Endothelial cell of umbilical vein (primary cell): ENCODE measurements at regions of chr5 and their contacts with region 1.

Region 1: GRCh38 chr5:100430268-100431195 is 104.6 kb upstream of the FAM174A start:
- DNase-seq: peak; percentile 54
- H3K4me3 ChIP-seq: no peak overlapping the region
- H3K27ac ChIP-seq: no peak overlapping the region
- H3K4me1 ChIP-seq: no peaks in the 10 kb centered on the region
- H3K27me3 ChIP-seq: no peaks in the 10 kb centered on the region
- CTCF ChIP-seq: peak; percentile 90 to 96
- POLR2A ChIP-seq: no peak

Region 2: GRCh38 chr5:100119903-100120302 is 310.6 kb before region 1 on chr5:
- CTCF ChIA-PET with region 1: no interaction called
- POLR2A ChIA-PET with region 1: no interaction called
- dilution Hi-C with region 1: no loop called
- intact Hi-C with region 1: no loop called
- DNase-seq: no peak
- H3K4me3 ChIP-seq: no peak overlapping the region
- H3K27ac ChIP-seq: no peak overlapping the region
- H3K4me1 ChIP-seq: no peaks in the 10 kb centered on the region
- H3K27me3 ChIP-seq: no peaks in the 10 kb centered on the region
- CTCF ChIP-seq: no peak
- POLR2A ChIP-seq: no peak

Region 3: DNA sequence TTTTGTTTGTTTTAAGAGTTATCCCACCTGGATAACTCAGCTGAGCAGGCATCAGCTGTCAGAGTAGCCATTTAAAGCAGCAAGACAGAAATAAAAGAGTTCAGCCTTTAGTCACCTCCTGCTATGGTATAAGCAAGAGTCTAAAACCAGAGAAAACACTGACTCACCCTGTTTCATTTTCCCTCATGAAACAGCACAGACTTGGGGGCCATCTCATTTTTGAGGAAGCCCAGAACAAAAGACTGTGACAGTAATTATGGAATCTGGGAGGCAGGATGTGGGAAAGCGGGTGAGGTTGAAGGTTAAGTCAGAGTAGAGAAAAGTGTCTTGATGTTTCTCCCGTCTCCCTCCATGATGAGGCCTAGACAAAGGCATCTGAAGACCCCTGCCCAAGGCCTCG is 14.4 kb after region 1 on chr5:
- CTCF ChIA-PET with region 1: interaction called, 10 read pairs
- POLR2A ChIA-PET with region 1: no interaction called
- dilution Hi-C with region 1: no loop called
- intact Hi-C with region 1: no loop called
- DNase-seq: no peak
- H3K4me3 ChIP-seq: no peak overlapping the region
- H3K27ac ChIP-seq: no peak overlapping the region
- H3K4me1 ChIP-seq: no peaks in the 10 kb centered on the region
- H3K27me3 ChIP-seq: no peaks in the 10 kb centered on the region
- CTCF ChIP-seq: no peak
- POLR2A ChIP-seq: no peak

Region 4: DNA sequence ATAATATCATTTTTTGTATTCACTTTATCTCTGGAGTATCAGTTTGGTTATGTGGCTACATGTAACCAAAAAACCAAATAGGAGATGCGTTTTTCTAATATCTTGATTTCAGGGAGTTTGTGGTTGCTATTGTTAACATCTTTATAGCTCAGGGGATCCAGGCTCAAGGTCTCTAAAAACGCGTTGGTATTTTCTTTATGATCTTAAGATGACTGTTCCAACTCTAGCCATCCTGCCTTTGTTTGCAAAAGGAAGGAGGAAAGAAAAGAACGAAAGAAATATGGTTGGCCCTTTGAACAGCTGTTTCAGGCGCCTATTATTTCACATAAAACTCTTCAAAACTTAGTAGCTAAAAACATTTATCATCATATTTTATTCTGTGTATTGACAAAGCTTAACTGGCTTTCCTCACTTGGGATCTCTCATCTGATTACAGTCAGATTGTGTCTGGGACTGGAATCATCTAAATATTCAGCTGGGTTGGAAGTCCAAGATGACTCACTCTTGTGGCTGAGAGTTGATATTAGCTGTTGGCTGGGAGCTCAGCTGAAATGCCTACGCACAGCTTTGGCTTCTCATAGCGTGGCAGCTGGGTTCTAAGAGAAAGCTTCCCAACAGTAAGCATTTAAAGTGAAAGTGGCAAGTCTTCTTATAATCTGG is 164.8 kb after region 1 on chr5:
- CTCF ChIA-PET with region 1: interaction called, 10 read pairs
- POLR2A ChIA-PET with region 1: no interaction called
- dilution Hi-C with region 1: no loop called
- intact Hi-C with region 1: no loop called
- DNase-seq: peak; percentile 96
- H3K4me3 ChIP-seq: peak overlapping the region in 2 of 3 experiments; percentile 2 to 54
- H3K27ac ChIP-seq: peak overlapping the region; percentile 87
- H3K4me1 ChIP-seq: peaks cover 21% of the 10 kb centered on the region
- H3K27me3 ChIP-seq: no peaks in the 10 kb centered on the region
- CTCF ChIP-seq: no peak
- POLR2A ChIP-seq: no peak

Region 5: DNA sequence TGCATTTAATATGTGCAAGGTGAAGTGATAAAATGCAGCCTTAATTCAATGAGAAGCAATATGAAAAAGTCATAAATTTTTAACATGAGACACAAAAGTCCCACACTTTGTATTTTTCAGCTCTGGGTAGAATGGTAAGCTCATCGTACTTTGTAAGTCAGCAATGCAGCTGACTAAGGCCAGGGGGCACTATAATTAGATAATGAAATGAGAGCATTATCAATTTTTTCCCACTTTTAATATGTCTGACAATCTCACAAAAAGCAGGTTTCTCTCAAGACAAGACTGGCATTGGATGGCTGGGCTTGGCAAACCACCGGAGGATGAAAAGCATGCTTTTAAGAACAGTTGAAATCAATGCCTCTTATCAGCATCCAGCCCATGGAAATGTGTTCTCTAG is 267.4 kb after region 1 on chr5:
- CTCF ChIA-PET with region 1: no interaction called
- POLR2A ChIA-PET with region 1: no interaction called
- dilution Hi-C with region 1: no loop called
- intact Hi-C with region 1: no loop called
- DNase-seq: no peak
- H3K4me3 ChIP-seq: no peak overlapping the region
- H3K27ac ChIP-seq: no peak overlapping the region
- H3K4me1 ChIP-seq: no peaks in the 10 kb centered on the region
- H3K27me3 ChIP-seq: no peaks in the 10 kb centered on the region
- CTCF ChIP-seq: peak in 1 of 2 donors; percentile 10
- POLR2A ChIP-seq: no peak

Region 6: DNA sequence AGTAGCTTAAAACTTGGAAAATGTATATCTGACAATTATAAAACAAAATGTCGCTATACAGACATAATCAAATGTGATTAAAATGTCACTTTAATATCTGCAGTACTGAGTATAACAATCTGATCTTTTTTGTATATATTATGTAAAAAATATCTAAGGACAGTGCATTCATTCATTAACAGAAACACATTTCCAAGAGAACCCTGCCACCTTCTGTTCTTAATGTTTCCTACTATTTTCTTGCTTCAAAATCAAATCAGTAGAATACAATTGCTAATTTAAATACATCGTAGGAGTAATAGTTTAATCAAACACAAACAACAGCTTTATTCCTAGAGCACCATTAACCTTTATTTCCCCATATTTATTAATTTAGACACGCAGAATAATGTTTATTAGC is 615.2 kb after region 1 on chr5:
- CTCF ChIA-PET with region 1: interaction called, 11 read pairs
- POLR2A ChIA-PET with region 1: no interaction called
- dilution Hi-C with region 1: no loop called
- intact Hi-C with region 1: loop called (anchors 1 kb)
- DNase-seq: peak; percentile 55
- H3K4me3 ChIP-seq: no peak overlapping the region
- H3K27ac ChIP-seq: no peak overlapping the region
- H3K4me1 ChIP-seq: no peaks in the 10 kb centered on the region
- H3K27me3 ChIP-seq: no peaks in the 10 kb centered on the region
- CTCF ChIP-seq: no peak
- POLR2A ChIP-seq: no peak

Region 7: GRCh38 chr5:101678481-101679193 is 1248.1 kb after region 1 on chr5:
- CTCF ChIA-PET with region 1: interaction called, 10 read pairs
- POLR2A ChIA-PET with region 1: no interaction called
- dilution Hi-C with region 1: no loop called
- intact Hi-C with region 1: loop called (anchors 1 kb)
- DNase-seq: peak; percentile 71
- H3K4me3 ChIP-seq: no peak overlapping the region
- H3K27ac ChIP-seq: no peak overlapping the region
- H3K4me1 ChIP-seq: no peaks in the 10 kb centered on the region
- H3K27me3 ChIP-seq: no peaks in the 10 kb centered on the region
- CTCF ChIP-seq: peak; percentile 82 to 93
- POLR2A ChIP-seq: no peak